CD4-positive, alpha-beta memory T cell (primary cell): ENCODE measurements at regions of chr1 and their contacts with region 1.

Region 1: DNA sequence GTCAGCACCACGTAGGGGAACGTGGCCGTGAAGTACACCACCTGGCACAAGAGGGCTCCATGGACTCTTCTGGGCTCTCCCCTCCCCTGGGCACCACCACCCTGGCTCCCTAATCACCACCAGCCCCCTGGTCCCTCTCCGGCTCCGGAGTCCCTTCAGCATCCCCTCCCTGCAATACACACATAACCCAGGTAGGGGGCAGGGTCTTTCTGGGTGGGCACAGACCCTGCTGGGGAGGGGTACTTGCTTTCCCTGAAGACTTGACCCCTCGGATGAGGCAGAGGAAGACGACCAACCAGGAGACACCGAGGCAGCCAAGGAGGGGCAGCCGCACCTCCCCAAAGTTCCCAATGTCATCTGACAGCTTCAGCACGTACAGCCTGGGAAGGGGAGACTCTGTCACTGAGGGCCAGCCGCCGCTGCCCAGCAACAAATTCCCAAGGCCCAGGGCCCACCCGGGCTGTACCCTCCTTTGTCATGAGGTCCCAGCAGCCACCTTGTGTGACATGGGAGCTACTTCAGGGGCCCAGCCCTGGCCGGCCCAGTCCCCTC is 11.3 kb downstream of the CCDC24 start:
- DNase-seq: no peak
- H3K4me3 ChIP-seq: no peak overlapping the region
- H3K4me3 Mint-ChIP-seq: no peak overlapping the region
- H3K27ac ChIP-seq: no peak overlapping the region
- H3K27ac Mint-ChIP-seq: no peak overlapping the region
- H3K4me1 ChIP-seq: no peaks in the 10 kb centered on the region
- H3K4me1 Mint-ChIP-seq: peaks cover 0 to 2% (median 0%) of the 10 kb centered on the region in 4 donors
- H3K27me3 ChIP-seq: no peaks in the 10 kb centered on the region
- H3K27me3 Mint-ChIP-seq: no peaks in the 10 kb centered on the region

Region 2: GRCh38 chr1:43952731-43953346 is 49.8 kb before region 1 on chr1:
- CTCF ChIA-PET with region 1: interaction called, 11 read pairs
- POLR2A ChIA-PET with region 1: no interaction called
- intact Hi-C with region 1: no loop called
- DNase-seq: no peak
- H3K4me3 ChIP-seq: no peak overlapping the region
- H3K4me3 Mint-ChIP-seq: no peak overlapping the region
- H3K27ac ChIP-seq: no peak overlapping the region
- H3K27ac Mint-ChIP-seq: no peak overlapping the region
- H3K4me1 ChIP-seq: peaks cover 8% of the 10 kb centered on the region
- H3K4me1 Mint-ChIP-seq: peaks cover 15 to 39% (median 22%) of the 10 kb centered on the region in 4 donors
- H3K27me3 ChIP-seq: no peaks in the 10 kb centered on the region
- H3K27me3 Mint-ChIP-seq: no peaks in the 10 kb centered on the region

Region 3: DNA sequence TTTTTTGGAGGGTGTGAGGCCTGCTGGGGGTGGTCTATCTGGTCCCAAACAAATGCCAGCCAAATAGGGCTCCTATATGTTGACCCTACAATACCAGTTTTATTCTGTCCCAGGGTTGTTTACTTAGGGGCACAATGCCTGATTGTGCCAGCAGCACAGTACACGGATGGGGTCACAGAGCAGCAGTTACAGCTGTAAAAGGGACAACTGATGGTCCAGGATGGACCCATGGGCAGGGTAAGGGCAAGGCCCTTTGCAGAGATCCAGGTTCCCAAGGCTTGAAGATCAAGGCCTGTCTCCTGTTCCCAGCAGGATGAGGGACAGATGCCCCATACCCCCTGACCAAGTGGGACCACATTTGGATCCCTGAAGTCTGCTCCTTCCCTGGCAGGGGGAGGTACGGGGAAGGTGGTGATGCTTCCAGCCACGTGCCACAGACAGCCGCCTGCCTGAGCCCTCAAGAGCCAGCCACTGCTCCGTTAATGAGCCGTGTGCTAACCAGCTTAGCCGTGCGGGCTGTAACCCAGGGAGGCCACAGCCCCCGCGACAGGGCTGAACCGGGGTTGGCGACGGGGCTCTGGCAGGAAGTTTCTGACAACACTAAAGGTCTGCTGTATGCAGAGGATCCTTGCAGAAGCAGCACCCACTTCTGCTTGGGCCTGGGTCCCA is 10.4 kb after region 1 on chr1:
- CTCF ChIA-PET with region 1: interaction called, 18 read pairs
- POLR2A ChIA-PET with region 1: no interaction called
- intact Hi-C with region 1: no loop called
- DNase-seq: no peak
- H3K4me3 ChIP-seq: no peak overlapping the region
- H3K4me3 Mint-ChIP-seq: no peak overlapping the region
- H3K27ac ChIP-seq: no peak overlapping the region
- H3K27ac Mint-ChIP-seq: no peak overlapping the region
- H3K4me1 ChIP-seq: no peaks in the 10 kb centered on the region
- H3K4me1 Mint-ChIP-seq: peaks cover 0 to 4% (median 1%) of the 10 kb centered on the region in 4 donors
- H3K27me3 ChIP-seq: no peaks in the 10 kb centered on the region
- H3K27me3 Mint-ChIP-seq: no peaks in the 10 kb centered on the region

Region 4: DNA sequence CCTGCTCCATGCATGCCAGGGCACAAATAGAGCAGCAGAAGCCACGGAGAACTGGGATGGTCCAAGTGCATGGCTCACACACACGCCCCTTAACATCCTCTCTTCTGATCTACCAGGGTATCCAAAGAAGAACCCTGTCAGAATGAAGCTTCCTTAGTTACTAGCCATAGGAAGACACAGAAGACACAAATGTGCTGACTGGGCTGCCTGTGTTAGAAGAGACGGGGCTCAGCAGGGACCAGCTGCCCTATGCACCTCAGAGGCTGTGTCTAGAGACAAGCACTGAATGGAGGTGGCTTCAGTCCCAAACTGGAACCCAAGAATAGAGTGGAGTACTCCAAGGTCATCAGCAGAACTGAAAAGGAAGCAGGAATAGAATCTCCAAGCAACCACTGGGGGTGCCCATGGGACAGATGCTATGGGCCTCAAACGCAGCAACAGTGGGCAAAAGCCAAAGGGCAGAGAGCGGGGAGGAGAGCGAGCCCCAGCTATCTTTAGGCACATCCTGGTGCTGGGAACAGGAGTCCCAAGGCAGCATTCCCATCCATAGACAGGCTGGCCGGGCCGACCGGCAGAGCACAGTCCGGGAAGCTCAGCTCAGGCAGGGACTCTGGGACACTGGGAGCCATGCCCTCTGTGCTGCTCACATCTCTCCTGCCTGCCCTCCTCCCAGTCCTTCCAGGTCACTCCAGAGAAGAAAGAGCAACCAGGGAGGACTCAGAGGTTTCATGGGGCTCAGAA is 19.1 kb after region 1 on chr1:
- CTCF ChIA-PET with region 1: interaction called, 18 read pairs
- POLR2A ChIA-PET with region 1: interaction called, 4 read pairs
- intact Hi-C with region 1: no loop called
- DNase-seq: no peak
- H3K4me3 ChIP-seq: no peak overlapping the region
- H3K4me3 Mint-ChIP-seq: no peak overlapping the region
- H3K27ac ChIP-seq: no peak overlapping the region
- H3K27ac Mint-ChIP-seq: no peak overlapping the region
- H3K4me1 ChIP-seq: no peaks in the 10 kb centered on the region
- H3K4me1 Mint-ChIP-seq: no peaks in the 10 kb centered on the region
- H3K27me3 ChIP-seq: no peaks in the 10 kb centered on the region
- H3K27me3 Mint-ChIP-seq: peaks cover 0 to 2% of the 10 kb centered on the region in 2 donors

Region 5: GRCh38 chr1:44029906-44030604 is 27.4 kb after region 1 on chr1:
- CTCF ChIA-PET with region 1: interaction called, 225 read pairs
- POLR2A ChIA-PET with region 1: no interaction called
- intact Hi-C with region 1: no loop called
- DNase-seq: peak; percentile 84 to 89 (median 86)
- H3K4me3 ChIP-seq: peak overlapping the region; percentile 66 to 69
- H3K4me3 Mint-ChIP-seq: peak overlapping the region; percentile 89 to 98 (median 96)
- H3K27ac ChIP-seq: peak overlapping the region; percentile 64
- H3K27ac Mint-ChIP-seq: peak overlapping the region; percentile 95 to 97 (median 96)
- H3K4me1 ChIP-seq: peaks cover 18% of the 10 kb centered on the region
- H3K4me1 Mint-ChIP-seq: peaks cover 17 to 39% (median 26%) of the 10 kb centered on the region in 4 donors
- H3K27me3 ChIP-seq: no peaks in the 10 kb centered on the region
- H3K27me3 Mint-ChIP-seq: no peaks in the 10 kb centered on the region

Region 6: GRCh38 chr1:44044071-44044801 is 41.6 kb after region 1 on chr1:
- CTCF ChIA-PET with region 1: interaction called, 83 read pairs
- POLR2A ChIA-PET with region 1: no interaction called
- intact Hi-C with region 1: loop called (anchors 1 kb)
- DNase-seq: no peak
- H3K4me3 ChIP-seq: no peak overlapping the region
- H3K4me3 Mint-ChIP-seq: no peak overlapping the region
- H3K27ac ChIP-seq: no peak overlapping the region
- H3K27ac Mint-ChIP-seq: no peak overlapping the region
- H3K4me1 ChIP-seq: no peaks in the 10 kb centered on the region
- H3K4me1 Mint-ChIP-seq: peaks cover 0 to 5% (median 3%) of the 10 kb centered on the region in 4 donors
- H3K27me3 ChIP-seq: no peaks in the 10 kb centered on the region
- H3K27me3 Mint-ChIP-seq: peaks cover 9 to 16% of the 10 kb centered on the region in 2 donors

Region 7: DNA sequence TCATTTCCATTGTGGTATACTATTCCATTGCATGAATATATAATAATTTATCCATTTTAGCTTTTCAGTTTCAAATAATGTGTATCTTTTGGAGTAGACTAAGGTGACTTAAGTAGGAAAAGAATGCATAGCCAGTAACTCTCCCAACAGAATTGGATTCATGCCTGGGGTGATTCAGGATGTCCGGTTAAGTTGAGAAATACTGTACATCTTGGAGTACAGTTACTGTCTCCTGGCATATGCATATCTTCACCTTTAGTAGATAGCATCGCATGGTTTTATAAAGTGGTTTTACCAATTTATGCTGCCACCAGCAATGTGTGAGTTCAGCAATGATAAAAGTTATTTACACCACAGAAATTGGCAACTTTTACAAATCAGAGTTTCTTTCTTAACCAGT is 47.2 kb after region 1 on chr1:
- CTCF ChIA-PET with region 1: interaction called, 83 read pairs
- POLR2A ChIA-PET with region 1: no interaction called
- intact Hi-C with region 1: loop called (anchors 1 kb)
- DNase-seq: no peak
- H3K4me3 ChIP-seq: no peak overlapping the region
- H3K4me3 Mint-ChIP-seq: no peak overlapping the region
- H3K27ac ChIP-seq: no peak overlapping the region
- H3K27ac Mint-ChIP-seq: no peak overlapping the region
- H3K4me1 ChIP-seq: no peaks in the 10 kb centered on the region
- H3K4me1 Mint-ChIP-seq: peaks cover 0 to 5% (median 3%) of the 10 kb centered on the region in 4 donors
- H3K27me3 ChIP-seq: no peaks in the 10 kb centered on the region
- H3K27me3 Mint-ChIP-seq: peaks cover 12 to 13% of the 10 kb centered on the region in 2 donors